Calu3 (cell line): ENCODE measurements at regions of chr2 and their contacts with region 1.

Region 1: DNA sequence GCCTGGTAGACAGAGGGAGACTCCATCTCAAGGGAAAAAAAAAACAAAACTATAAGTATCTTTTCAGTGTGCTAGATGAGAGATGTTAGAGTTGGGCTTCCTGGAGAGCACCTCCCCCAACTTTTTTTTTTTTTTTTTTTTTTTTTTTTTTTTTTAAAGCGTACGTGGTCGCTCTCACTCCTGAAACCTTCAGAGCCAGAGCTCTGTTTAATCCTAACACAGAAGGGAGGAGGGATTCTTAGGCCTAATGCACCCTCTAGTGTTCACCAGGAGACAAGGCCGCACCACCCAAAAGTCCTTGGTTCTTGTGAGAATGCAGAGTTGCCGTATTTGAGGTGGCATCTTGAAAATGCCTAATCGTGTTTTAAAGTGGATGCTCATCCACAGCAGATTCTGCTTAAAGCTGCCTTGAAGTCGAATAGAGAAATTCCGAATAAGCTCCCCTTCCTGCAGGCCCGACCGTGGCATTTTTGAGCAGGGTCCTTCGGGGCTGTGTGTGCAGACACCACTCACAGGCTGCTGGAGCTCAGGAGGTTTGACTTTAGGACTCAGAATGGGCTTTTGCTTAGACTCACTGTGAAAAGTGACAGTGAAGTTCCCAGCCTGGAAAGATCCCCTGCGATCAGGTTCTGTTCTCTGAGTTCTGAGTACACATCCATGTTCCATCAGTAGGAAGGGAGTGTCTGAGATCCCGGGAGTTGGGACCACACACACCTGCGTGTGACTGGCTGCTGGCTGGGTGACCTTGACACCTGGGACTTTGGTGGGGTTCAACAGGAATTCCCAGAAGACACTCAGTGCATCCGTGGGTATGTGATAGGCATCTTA is 252.6 kb downstream of the AGAP1 start:
- DNase-seq: peak; percentile 69
- H3K4me3 Mint-ChIP-seq: no peak overlapping the region
- H3K27ac Mint-ChIP-seq: no peak overlapping the region
- H3K4me1 Mint-ChIP-seq: peaks cover 11% of the 10 kb centered on the region
- H3K27me3 Mint-ChIP-seq: no peaks in the 10 kb centered on the region
- CTCF ChIP-seq: peak; percentile 76

Region 2: GRCh38 chr2:235639428-235639773 is 107.1 kb before region 1 on chr2:
- CTCF ChIA-PET with region 1: interaction called, 11 read pairs
- intact Hi-C with region 1: no loop called
- DNase-seq: no peak
- H3K4me3 Mint-ChIP-seq: no peak overlapping the region
- H3K27ac Mint-ChIP-seq: no peak overlapping the region
- H3K4me1 Mint-ChIP-seq: no peaks in the 10 kb centered on the region
- H3K27me3 Mint-ChIP-seq: no peaks in the 10 kb centered on the region
- CTCF ChIP-seq: no peak

Region 3: GRCh38 chr2:235669983-235670962 is 76.2 kb before region 1 on chr2:
- CTCF ChIA-PET with region 1: interaction called, 3 read pairs
- intact Hi-C with region 1: loop called (anchors 2 kb)
- DNase-seq: peak; percentile 61
- H3K4me3 Mint-ChIP-seq: peak overlapping the region; percentile 85
- H3K27ac Mint-ChIP-seq: no peak overlapping the region
- H3K4me1 Mint-ChIP-seq: peaks cover 48% of the 10 kb centered on the region
- H3K27me3 Mint-ChIP-seq: no peaks in the 10 kb centered on the region
- CTCF ChIP-seq: peak; percentile 28